Activated CD4-positive, alpha-beta memory T cell treated with anti-CD3 and anti-CD28 coated beads, Interleukin-2, amount 10 ng/mL, durations not matched to agents 7 days and 5 days (primary cell): ENCODE measurements at regions of chr3 and their contacts with region 1.

Region 1: GRCh38 chr3:122415720-122416654 is at the start of gene WDR5B:
- DNase-seq: peak; percentile 99
- H3K4me3 Mint-ChIP-seq: peak within 1 kb of the TSS; percentile 86
- H3K27ac Mint-ChIP-seq: peak within 1 kb of the TSS; percentile 93
- H3K4me1 Mint-ChIP-seq: peaks cover 57% of the 10 kb centered on the region
- H3K27me3 Mint-ChIP-seq: no peaks in the 10 kb centered on the region
- total RNA-seq, gene WDR5B: 5.5 to 5.7 TPM

Region 2: DNA sequence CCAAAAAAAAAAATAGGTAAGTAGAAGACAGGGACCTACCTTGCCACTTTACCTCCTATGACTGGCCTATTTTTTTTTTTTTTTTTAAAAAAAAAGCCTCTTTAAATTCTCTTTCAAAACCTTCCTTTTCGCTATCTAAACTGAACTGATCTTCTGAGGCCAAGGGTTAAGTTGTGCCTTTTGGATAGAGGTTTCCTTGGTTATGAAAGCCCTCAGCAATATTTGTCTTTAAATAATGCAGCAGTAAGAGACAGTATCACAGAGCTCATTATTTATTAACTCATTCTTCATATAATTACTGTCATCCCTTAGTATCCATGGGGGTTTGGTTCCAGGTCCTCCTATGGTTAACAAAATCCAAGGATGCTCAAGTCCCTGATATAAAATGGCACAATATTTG is 42.0 kb before region 1 on chr3:
- CTCF ChIA-PET with region 1: no interaction called
- POLR2A ChIA-PET with region 1: no interaction called
- DNase-seq: no peak
- H3K4me3 Mint-ChIP-seq: no peak overlapping the region
- H3K27ac Mint-ChIP-seq: no peak overlapping the region
- H3K4me1 Mint-ChIP-seq: peaks cover 17% of the 10 kb centered on the region
- H3K27me3 Mint-ChIP-seq: no peaks in the 10 kb centered on the region

Region 3: GRCh38 chr3:122383771-122384697 is 32.0 kb before region 1 on chr3 and contains the start of gene FAM162A:
- CTCF ChIA-PET with region 1: interaction called, 42 read pairs
- POLR2A ChIA-PET with region 1: interaction called, 63 read pairs
- DNase-seq: peak; percentile 95
- H3K4me3 Mint-ChIP-seq: peak within 1 kb of the TSS; percentile 88
- H3K27ac Mint-ChIP-seq: peak within 1 kb of the TSS; percentile 86
- H3K4me1 Mint-ChIP-seq: peaks cover 53% of the 10 kb centered on the region
- H3K27me3 Mint-ChIP-seq: no peaks in the 10 kb centered on the region
- total RNA-seq, gene FAM162A: 74.5 to 77.5 TPM

Region 4: DNA sequence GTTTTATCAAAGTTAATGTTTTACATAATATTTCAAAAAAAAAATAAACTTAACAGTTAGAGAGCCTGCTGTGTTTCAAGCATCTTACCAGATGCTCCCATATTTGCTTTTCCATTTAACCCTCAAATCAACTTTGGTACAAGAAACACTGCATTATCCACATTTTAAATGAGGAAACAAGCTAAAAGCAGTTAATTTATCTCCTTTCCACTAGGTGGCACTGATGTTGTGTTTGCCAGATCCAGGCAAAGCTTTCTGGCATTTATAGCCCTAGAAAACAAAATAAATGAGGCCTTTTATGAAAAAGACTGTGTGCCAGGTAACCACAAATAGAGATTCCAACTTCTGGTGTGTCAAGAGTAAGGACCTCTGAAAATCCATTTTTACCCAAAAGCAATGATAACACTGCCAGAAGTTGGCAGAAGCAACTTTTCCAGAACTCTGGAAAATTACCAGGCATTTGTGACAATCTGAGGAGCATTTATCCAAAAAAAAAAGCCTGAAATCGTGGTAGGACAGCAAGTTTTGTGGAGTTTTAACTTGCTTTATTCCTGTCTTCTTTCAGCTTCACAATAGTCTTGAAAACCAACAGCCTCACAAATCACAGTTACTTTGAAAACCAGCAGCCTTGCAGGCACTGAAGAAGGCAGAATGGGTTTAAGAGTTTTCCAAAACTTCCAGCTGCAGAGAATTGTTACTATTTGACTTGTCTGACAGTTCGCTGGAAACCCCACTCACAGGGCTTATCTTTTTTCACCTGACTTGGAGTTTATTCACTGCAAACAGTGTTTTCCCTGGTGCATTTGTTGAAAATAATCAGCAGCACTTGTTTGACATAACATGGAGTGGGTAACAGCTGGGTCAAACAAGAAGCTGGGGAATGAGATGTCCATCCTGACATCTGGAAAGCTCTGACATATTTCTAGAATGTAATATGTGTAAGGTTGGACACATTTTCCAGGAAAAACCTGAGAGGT is 22.8 kb before region 1 on chr3:
- CTCF ChIA-PET with region 1: interaction called, 13 read pairs
- POLR2A ChIA-PET with region 1: interaction called, 9 read pairs
- DNase-seq: peak; percentile 23
- H3K4me3 Mint-ChIP-seq: no peak overlapping the region
- H3K27ac Mint-ChIP-seq: no peak overlapping the region
- H3K4me1 Mint-ChIP-seq: peaks cover 25% of the 10 kb centered on the region
- H3K27me3 Mint-ChIP-seq: no peaks in the 10 kb centered on the region

Region 5: GRCh38 chr3:122427857-122428471 is 12.0 kb after region 1 on chr3:
- CTCF ChIA-PET with region 1: no interaction called
- POLR2A ChIA-PET with region 1: interaction called, 15 read pairs
- DNase-seq: no peak
- H3K4me3 Mint-ChIP-seq: no peak overlapping the region
- H3K27ac Mint-ChIP-seq: peak overlapping the region; percentile 18
- H3K4me1 Mint-ChIP-seq: peaks cover 20% of the 10 kb centered on the region
- H3K27me3 Mint-ChIP-seq: no peaks in the 10 kb centered on the region

Region 6: GRCh38 chr3:122458992-122459391 is 43.0 kb after region 1 on chr3:
- CTCF ChIA-PET with region 1: no interaction called
- POLR2A ChIA-PET with region 1: no interaction called
- DNase-seq: no peak
- H3K4me3 Mint-ChIP-seq: no peak overlapping the region
- H3K27ac Mint-ChIP-seq: no peak overlapping the region
- H3K4me1 Mint-ChIP-seq: no peaks in the 10 kb centered on the region
- H3K27me3 Mint-ChIP-seq: no peaks in the 10 kb centered on the region

Region 7: DNA sequence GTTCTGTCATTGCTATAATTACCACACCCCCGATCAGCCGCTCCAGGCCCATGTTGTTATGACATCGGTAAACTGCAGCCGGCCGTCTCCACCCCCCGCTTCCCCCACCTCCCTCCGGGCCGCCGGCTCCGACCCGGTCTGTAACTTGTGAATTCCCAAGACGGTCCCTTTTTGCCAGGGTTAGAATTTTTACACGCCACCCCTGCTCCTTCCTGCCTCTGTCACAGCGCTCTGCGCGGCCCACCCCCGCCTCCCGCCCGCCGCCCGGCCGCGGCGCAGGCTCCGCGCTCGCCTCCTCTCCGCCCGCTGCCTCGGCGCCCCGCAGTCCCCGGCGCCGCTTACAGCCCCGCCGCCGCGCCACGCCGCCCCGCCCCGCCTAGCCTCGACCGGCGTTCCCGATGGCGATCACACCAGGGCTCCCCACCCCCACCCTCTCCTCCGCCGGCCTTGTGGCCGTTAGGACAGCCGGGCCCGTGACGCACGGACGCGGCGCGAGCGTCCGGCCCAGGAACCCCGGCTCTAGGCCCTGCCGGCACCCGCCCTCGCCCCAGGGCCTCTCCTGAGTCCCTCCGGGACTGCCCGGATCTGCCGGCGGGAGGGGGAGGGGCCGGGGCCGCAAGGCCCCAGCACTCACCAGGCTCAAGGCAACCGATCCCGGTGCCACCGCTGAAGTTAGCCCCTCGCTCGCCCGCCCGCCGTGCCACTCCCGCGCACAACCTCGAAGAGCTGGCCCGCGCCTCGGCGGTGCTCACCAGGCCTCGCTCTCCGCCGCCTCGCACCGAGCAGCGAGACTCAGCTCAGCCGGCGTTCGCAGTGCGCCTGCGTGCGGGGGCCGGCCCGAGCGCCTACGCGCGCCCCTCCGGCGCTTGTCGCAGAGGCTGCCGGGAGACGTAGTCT is 98.4 kb after region 1 on chr3 and contains the start of gene KPNA1:
- CTCF ChIA-PET with region 1: interaction called, 5 read pairs
- POLR2A ChIA-PET with region 1: interaction called, 29 read pairs
- DNase-seq: peak; percentile 89
- H3K4me3 Mint-ChIP-seq: peak within 1 kb of the TSS; percentile 78
- H3K27ac Mint-ChIP-seq: peak within 1 kb of the TSS; percentile 77
- H3K4me1 Mint-ChIP-seq: peaks cover 28% of the 10 kb centered on the region
- H3K27me3 Mint-ChIP-seq: peaks cover 5% of the 10 kb centered on the region
- total RNA-seq, gene KPNA1: 41.8 to 45.8 TPM

Region 8: GRCh38 chr3:122564155-122564912 is 148.3 kb after region 1 on chr3 and contains the starts of genes DTX3L and PARP9:
- CTCF ChIA-PET with region 1: interaction called, 3 read pairs
- POLR2A ChIA-PET with region 1: interaction called, 23 read pairs
- DNase-seq: peak; percentile 91
- H3K4me3 Mint-ChIP-seq: peak within 1 kb of the TSS; percentile 98
- H3K27ac Mint-ChIP-seq: peak within 1 kb of the TSS; percentile 98
- H3K4me1 Mint-ChIP-seq: peaks cover 74% of the 10 kb centered on the region
- H3K27me3 Mint-ChIP-seq: no peaks in the 10 kb centered on the region
- total RNA-seq, gene DTX3L: 135 to 144 TPM
- total RNA-seq, gene PARP9: 151 to 157 TPM

Region 9: DNA sequence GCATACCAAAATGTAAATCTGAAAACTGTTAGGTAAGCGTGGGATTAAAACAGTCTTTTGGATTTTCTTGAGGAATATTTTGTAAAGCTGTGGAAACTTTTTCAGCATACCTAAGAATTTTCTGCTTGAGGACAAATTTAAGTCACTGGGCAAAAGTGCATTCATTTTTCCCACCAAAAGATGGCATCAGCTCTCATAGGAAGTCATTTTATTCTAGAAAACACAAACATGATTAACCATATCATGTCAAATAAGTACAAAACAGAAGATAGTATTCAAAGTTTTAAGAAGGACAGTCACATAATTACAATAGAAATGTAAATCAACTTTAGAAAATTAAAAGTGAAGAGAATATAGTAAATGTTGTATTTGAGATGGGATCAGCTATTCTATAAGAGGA is 442.4 kb after region 1 on chr3:
- CTCF ChIA-PET with region 1: no interaction called
- POLR2A ChIA-PET with region 1: no interaction called
- DNase-seq: no peak
- H3K4me3 Mint-ChIP-seq: no peak overlapping the region
- H3K27ac Mint-ChIP-seq: no peak overlapping the region
- H3K4me1 Mint-ChIP-seq: peaks cover 2% of the 10 kb centered on the region
- H3K27me3 Mint-ChIP-seq: no peaks in the 10 kb centered on the region